HCT116 (cell line): ENCODE measurements at regions of chr5 and their contacts with region 1.

Region 1: DNA sequence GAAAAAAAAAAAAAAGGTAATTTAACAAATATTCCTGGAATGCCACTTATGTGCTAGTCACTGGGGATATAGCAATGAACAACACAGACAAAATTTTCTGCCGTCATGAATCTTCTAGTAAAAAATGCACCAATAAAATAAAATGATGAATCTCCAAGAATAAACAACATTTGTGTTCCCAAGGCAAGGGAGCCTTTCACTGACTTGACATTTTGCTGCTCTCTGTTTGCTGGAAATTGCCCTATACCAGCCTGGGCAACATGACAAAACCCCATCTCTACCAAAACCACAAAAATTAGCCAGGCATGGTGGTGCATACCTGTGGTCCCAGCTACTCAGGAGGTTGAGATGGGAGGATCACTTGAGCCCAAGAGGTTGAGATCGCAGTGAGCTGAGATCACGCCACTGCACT is 64.5 kb upstream of the ERBIN start:
- DNase-seq: peak; percentile 61
- ATAC-seq: peak; percentile 97
- H3K4me3 ChIP-seq: peak overlapping the region in 1 of 2 experiments; percentile 33; a peak in 2 of 4 replicates
- H3K27ac ChIP-seq: peak overlapping the region; percentile 65; the same call in 1 of the 2 replicates
- H3K4me1 ChIP-seq: peaks cover 16 to 46% of the 10 kb centered on the region in 2 experiments
- H3K27me3 ChIP-seq: no peaks in the 10 kb centered on the region
- CTCF ChIP-seq: no peak
- POLR2A ChIP-seq: no peak
- RAD21 ChIP-seq: no peak

Region 2: DNA sequence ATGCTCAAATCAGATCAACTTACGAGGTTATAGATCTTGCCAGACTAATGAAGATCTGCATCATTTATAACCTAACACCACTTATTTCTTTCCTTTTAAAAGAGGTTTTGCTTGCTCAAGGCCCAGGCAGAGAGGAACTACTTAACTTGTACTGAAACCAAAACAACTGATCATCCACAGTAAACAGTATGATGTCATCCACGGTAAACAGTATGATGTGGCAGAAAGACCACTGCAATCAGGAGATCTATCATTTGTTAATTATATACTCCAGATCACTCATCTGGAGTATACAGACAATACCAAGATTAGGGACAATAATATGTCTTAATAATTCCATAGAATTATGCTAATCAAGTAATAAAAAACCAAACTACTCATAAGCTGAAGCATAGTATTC is 496.9 kb before region 1 on chr5:
- CTCF ChIA-PET with region 1: no interaction called
- POLR2A ChIA-PET with region 1: no interaction called
- RAD21 ChIA-PET with region 1: no interaction called
- intact Hi-C with region 1: no loop called
- DNase-seq: no peak
- ATAC-seq: no peak
- H3K4me3 ChIP-seq: no peak overlapping the region
- H3K27ac ChIP-seq: no peak overlapping the region
- H3K4me1 ChIP-seq: no peaks in the 10 kb centered on the region
- H3K27me3 ChIP-seq: no peaks in the 10 kb centered on the region
- CTCF ChIP-seq: no peak
- POLR2A ChIP-seq: no peak
- RAD21 ChIP-seq: no peak

Region 3: GRCh38 chr5:65779643-65780042 is 82.2 kb before region 1 on chr5:
- CTCF ChIA-PET with region 1: no interaction called
- POLR2A ChIA-PET with region 1: no interaction called
- RAD21 ChIA-PET with region 1: no interaction called
- intact Hi-C with region 1: loop called (anchors 10 kb)
- DNase-seq: no peak
- ATAC-seq: no peak
- H3K4me3 ChIP-seq: no peak overlapping the region
- H3K27ac ChIP-seq: no peak overlapping the region
- H3K4me1 ChIP-seq: no peaks in the 10 kb centered on the region
- H3K27me3 ChIP-seq: no peaks in the 10 kb centered on the region
- CTCF ChIP-seq: no peak
- POLR2A ChIP-seq: no peak
- RAD21 ChIP-seq: no peak

Region 4: GRCh38 chr5:65846101-65846500 is 15.7 kb before region 1 on chr5:
- CTCF ChIA-PET with region 1: no interaction called
- POLR2A ChIA-PET with region 1: no interaction called
- RAD21 ChIA-PET with region 1: no interaction called
- intact Hi-C with region 1: no loop called
- DNase-seq: no peak
- ATAC-seq: no peak
- H3K4me3 ChIP-seq: no peak overlapping the region
- H3K27ac ChIP-seq: no peak overlapping the region
- H3K4me1 ChIP-seq: no peaks in the 10 kb centered on the region
- H3K27me3 ChIP-seq: no peaks in the 10 kb centered on the region
- CTCF ChIP-seq: no peak
- POLR2A ChIP-seq: no peak
- RAD21 ChIP-seq: no peak

Region 5: GRCh38 chr5:65925601-65926275 is 63.9 kb after region 1 on chr5:
- CTCF ChIA-PET with region 1: no interaction called
- POLR2A ChIA-PET with region 1: no interaction called
- RAD21 ChIA-PET with region 1: no interaction called
- intact Hi-C with region 1: no loop called
- DNase-seq: peak; percentile 47
- ATAC-seq: peak; percentile 85
- H3K4me3 ChIP-seq: peak overlapping the region; percentile 81 to 90
- H3K27ac ChIP-seq: peak overlapping the region; percentile 92
- H3K4me1 ChIP-seq: peaks cover 15 to 49% of the 10 kb centered on the region in 2 experiments
- H3K27me3 ChIP-seq: no peaks in the 10 kb centered on the region
- CTCF ChIP-seq: peak in 2 of 3 experiments; percentile 26 to 27; a peak in 3 of 6 replicates
- POLR2A ChIP-seq: peak; percentile 51
- RAD21 ChIP-seq: peak; percentile 31; the same call in 1 of the 2 replicates